Posterior cingulate gyrus (tissue), 11 donors: ENCODE measurements at regions of chr19 and their contacts with region 1.

Region 1: GRCh38 chr19:49690656-49691242 is at the start of gene CPT1C:
- DNase-seq: peak; percentile 84 to 99 (median 92)

Region 2: GRCh38 chr19:49727217-49728030 is 36.7 kb after region 1 on chr19:
- intact Hi-C with region 1: no loop called
- DNase-seq: peak in 1 of 10 donors; percentile 62

Region 3: DNA sequence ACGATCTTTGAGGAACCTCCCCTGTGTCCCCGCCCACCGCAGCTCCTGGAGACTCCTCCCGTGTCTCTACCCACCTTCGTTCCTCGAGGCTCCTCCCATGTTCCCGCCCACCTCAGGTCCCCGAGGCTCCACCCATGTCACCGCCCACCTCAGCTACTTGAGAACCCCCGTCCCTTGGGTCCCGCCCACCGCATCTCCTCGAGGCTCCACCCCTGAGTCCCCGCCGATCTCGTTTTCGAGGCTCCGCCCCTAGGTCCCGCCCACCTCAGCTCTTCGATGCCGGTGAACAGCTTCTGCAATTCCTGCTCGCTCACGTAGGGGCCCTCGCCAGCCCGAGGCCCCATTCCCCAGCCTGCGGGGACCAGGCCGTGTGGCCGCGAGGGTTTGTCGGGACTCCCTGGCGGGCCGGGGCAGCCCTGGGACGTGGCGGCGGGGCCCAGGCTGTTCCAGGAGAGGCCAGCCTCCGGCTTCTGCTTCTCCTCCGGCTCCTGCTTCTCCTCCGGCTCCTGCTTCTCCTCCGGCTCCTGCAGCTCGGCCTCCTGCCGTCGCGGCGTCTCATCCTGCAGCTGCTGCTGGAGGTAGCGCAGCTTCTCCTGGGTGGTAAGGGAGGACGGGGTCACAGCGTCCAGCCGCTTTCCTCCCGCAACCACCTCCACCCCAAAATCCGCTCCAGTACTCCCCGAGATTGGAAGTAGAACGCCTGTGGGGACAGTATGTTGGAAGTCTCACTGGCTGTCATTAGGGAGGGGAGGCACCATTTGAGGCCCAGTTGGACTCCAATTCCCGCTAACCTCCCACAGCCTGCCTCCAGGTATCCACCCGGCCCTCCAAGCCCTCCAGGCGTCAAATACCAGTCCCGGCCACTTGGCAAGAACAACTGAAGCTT is 55.7 kb after region 1 on chr19:
- intact Hi-C with region 1: no loop called
- DNase-seq: peak in 3 of 10 donors; percentile 35 to 90 (median 85)

Region 4: GRCh38 chr19:49808711-49809159 is 118.0 kb after region 1 on chr19:
- intact Hi-C with region 1: loop called (anchors 10 kb)
- DNase-seq: peak; percentile 71 to 98 (median 87)

Region 5: DNA sequence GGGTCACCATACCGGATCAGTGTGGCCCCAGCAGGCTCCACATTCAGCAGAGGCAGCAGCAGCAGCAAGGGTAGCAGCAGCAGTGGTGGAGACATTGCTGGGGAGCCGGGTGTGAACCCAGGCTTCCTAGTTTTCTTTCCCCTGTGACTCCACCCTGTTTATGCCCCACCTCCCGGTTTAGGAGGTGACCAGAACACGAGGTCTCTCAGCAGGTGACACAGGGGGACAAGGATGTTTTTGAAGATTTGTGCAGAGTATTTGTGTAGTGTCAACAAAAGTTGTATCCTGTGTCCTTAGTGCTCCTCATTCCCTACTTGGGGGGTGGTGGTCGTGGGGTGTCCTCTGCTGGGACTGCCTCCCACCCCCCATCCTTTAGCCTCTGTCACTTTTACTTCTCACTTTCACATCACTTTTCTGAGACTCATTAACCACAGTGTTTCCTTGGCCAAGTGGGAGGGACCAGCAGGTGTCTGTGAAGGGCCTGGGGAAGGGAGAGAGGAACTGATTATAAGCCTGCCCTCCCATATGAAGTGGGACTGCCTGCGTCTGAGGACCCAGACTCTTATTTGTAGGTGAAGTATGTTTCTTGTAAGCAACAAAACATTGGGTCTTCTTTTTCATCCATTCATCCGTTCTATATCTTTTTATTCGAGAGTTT is 654.0 kb after region 1 on chr19:
- intact Hi-C with region 1: no loop called
- DNase-seq: peak in 2 of 10 donors; percentile 29 to 46